PC-9 (cell line): ENCODE measurements at regions of chr10 and their contacts with region 1.

Region 1: GRCh38 chr10:32271617-32272016 is 75.3 kb downstream of the EPC1 start:
- DNase-seq: no peak
- H3K4me3 ChIP-seq: no peak overlapping the region
- H3K27ac ChIP-seq: no peak overlapping the region
- H3K4me1 ChIP-seq: no peaks in the 10 kb centered on the region
- H3K27me3 ChIP-seq: no peaks in the 10 kb centered on the region
- CTCF ChIP-seq: no peak

Region 2: DNA sequence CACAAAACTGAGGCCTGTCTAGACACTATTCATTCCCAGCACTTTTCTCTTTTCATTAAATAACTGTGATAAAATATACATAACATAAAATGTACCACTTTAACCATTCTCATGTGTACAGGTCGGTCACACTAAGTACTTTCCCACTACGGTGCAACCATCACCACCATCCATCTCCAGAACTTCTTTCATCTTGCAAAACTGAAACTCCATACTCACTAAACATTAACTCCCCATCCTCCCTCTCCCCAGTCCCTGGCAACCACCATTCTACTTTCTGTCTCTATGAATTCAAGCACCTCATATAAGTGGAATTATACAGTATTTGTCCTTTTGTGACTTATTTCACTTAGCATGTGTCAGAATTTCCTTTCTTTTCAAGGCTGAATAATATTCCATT is 396.0 kb before region 1 on chr10:
- CTCF ChIA-PET with region 1: no interaction called
- POLR2A ChIA-PET with region 1: no interaction called
- intact Hi-C with region 1: no loop called
- DNase-seq: no peak
- H3K4me3 ChIP-seq: no peak overlapping the region
- H3K27ac ChIP-seq: no peak overlapping the region
- H3K4me1 ChIP-seq: 0 out of 2 replicates have a peak, but pooled peaks cover 3% of the 10 kb centered on the region
- H3K27me3 ChIP-seq: no peaks in the 10 kb centered on the region
- CTCF ChIP-seq: no peak

Region 3: GRCh38 chr10:32038777-32039176 is 232.8 kb before region 1 on chr10:
- CTCF ChIA-PET with region 1: no interaction called
- POLR2A ChIA-PET with region 1: no interaction called
- intact Hi-C with region 1: loop called (anchors 10 kb)
- DNase-seq: no peak
- H3K4me3 ChIP-seq: no peak overlapping the region
- H3K27ac ChIP-seq: no peak overlapping the region
- H3K4me1 ChIP-seq: no peaks in the 10 kb centered on the region
- H3K27me3 ChIP-seq: no peaks in the 10 kb centered on the region
- CTCF ChIP-seq: no peak

Region 4: GRCh38 chr10:32239770-32240169 is 31.8 kb before region 1 on chr10:
- CTCF ChIA-PET with region 1: interaction called, 4 read pairs
- POLR2A ChIA-PET with region 1: interaction called, 15 read pairs
- intact Hi-C with region 1: no loop called
- DNase-seq: peak in 1 of 2 experiments; percentile 76
- H3K4me3 ChIP-seq: no peak overlapping the region
- H3K27ac ChIP-seq: no peak overlapping the region; the same call in 1 of the 2 replicates
- H3K4me1 ChIP-seq: peaks cover 45% of the 10 kb centered on the region
- H3K27me3 ChIP-seq: no peaks in the 10 kb centered on the region
- CTCF ChIP-seq: no peak